ENCODE measurements at regions of chr16 and their contacts with region 1.

Region 1: DNA sequence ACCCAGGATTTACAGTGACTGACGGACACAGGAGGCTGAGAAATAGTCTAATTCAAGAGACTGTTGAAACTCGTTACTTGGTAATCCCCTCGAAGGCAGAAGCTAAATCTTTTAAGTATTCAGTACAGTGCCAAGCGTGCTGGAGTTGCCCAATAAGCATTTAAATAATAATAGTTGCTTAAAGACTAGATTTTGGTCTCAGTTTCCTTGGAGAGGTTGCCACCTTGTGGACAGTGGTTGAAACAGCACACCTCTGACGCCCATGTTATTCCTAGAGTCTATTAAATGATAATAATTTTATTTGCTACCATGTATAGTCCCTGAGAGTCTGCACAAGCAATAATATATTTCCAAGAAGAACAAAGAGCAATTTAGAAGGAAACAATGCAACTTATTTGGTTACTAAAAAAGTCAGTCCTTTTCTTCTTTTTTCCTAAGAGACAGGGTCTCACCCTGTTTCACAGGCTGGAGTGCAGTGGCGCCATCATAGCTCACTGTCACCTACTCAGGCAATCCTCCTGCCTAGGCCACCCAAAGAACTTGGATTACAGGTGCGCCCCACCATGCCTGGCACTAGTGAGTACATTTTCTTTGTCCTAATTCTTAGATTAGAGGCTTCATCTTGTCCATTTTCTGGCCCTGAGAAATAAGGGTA is 138.0 kb upstream of the NUDT7 start:
- DNase-seq: peak; percentile 57
- H3K4me3 ChIP-seq: no peak overlapping the region
- H3K27ac ChIP-seq: no peak overlapping the region
- H3K4me1 ChIP-seq: no peaks in the 10 kb centered on the region
- CTCF ChIP-seq: peak; percentile 94

Region 2: GRCh38 chr16:77393955-77394354 is 190.4 kb before region 1 on chr16:
- CTCF ChIA-PET with region 1: no interaction called
- POLR2A ChIA-PET with region 1: no interaction called
- intact Hi-C with region 1: loop called (anchors 10 kb)
- DNase-seq: no peak
- H3K4me3 ChIP-seq: no peak overlapping the region
- H3K27ac ChIP-seq: no peak overlapping the region
- H3K4me1 ChIP-seq: no peaks in the 10 kb centered on the region
- CTCF ChIP-seq: no peak

Region 3: GRCh38 chr16:77782694-77783093 is 198.4 kb after region 1 on chr16:
- CTCF ChIA-PET with region 1: no interaction called
- POLR2A ChIA-PET with region 1: no interaction called
- intact Hi-C with region 1: no loop called
- DNase-seq: peak; percentile 3
- H3K4me3 ChIP-seq: no peak overlapping the region
- H3K27ac ChIP-seq: no peak overlapping the region
- H3K4me1 ChIP-seq: no peaks in the 10 kb centered on the region
- CTCF ChIP-seq: peak; percentile 67

Region 4: GRCh38 chr16:77912618-77913017 is 328.3 kb after region 1 on chr16:
- CTCF ChIA-PET with region 1: no interaction called
- POLR2A ChIA-PET with region 1: no interaction called
- intact Hi-C with region 1: no loop called
- DNase-seq: no peak
- H3K4me3 ChIP-seq: no peak overlapping the region
- H3K27ac ChIP-seq: no peak overlapping the region
- H3K4me1 ChIP-seq: no peaks in the 10 kb centered on the region
- CTCF ChIP-seq: no peak